B cell (primary cell): ENCODE measurements at regions of chr20 and their contacts with region 1.

Region 1: DNA sequence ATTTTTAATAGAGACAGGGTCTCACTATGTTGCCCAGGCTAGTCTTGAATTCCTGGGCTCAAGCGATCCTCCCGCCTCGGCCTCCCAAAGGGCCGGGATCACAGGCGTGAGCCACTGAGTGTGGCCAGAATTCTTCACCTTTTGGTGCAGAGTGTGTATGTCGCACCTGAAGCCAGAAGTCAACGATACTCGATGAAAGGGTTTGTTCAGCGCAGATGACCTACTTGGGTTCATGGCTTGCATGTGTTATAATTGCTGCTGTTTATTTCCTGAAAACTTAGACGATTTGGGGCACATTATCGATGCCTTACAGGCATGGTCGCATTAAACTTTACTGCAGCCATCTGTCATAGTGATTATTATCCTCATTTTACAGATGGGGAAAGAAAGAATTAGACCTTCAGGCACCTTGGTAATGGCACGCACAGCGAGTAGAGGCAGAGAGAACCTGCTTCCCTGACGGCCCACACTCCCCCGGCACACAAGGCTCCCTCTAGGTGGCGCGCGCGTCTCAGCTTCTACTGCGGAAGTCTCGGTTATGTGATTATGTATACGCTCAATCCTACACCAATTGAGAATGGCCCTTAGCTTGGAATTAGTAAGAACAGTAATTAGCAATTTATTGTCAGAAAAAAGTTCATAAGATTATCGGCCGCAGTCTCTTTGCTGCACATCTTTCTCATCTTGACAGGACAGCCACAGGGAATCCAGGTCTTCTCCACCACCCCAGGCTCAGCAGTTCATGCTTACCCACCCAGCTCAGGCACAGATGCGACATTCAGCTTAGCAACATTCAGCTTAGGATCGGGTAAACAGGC is 212.8 kb upstream of the PROKR2 start:
- DNase-seq: peak; percentile 85
- ATAC-seq: peak; percentile 91
- H3K4me3 ChIP-seq: no peak overlapping the region
- H3K4me3 Mint-ChIP-seq: peak overlapping the region; percentile 54
- H3K27ac ChIP-seq: no peak overlapping the region
- H3K27ac Mint-ChIP-seq: peak overlapping the region; percentile 56
- H3K4me1 ChIP-seq: peaks cover 7 to 12% of the 10 kb centered on the region in 2 donors
- H3K4me1 Mint-ChIP-seq: peaks cover 10% of the 10 kb centered on the region
- H3K27me3 ChIP-seq: no peaks in the 10 kb centered on the region
- H3K27me3 Mint-ChIP-seq: no peaks in the 10 kb centered on the region
- CTCF ChIP-seq: peak; percentile 79

Region 2: GRCh38 chr20:5279661-5280060 is 249.9 kb before region 1 on chr20:
- CTCF ChIA-PET with region 1: no interaction called
- POLR2A ChIA-PET with region 1: no interaction called
- intact Hi-C with region 1: no loop called
- DNase-seq: no peak
- ATAC-seq: no peak
- H3K4me3 ChIP-seq: no peak overlapping the region
- H3K4me3 Mint-ChIP-seq: no peak overlapping the region
- H3K27ac ChIP-seq: no peak overlapping the region
- H3K27ac Mint-ChIP-seq: no peak overlapping the region
- H3K4me1 ChIP-seq: no peaks in the 10 kb centered on the region
- H3K4me1 Mint-ChIP-seq: no peaks in the 10 kb centered on the region
- H3K27me3 ChIP-seq: peaks cover 0 to 6% (median 0%) of the 10 kb centered on the region in 4 experiments
- H3K27me3 Mint-ChIP-seq: peaks cover 52% of the 10 kb centered on the region
- CTCF ChIP-seq: no peak

Region 3: GRCh38 chr20:5513975-5514516 is 15.5 kb before region 1 on chr20:
- CTCF ChIA-PET with region 1: interaction called, 11 read pairs
- POLR2A ChIA-PET with region 1: no interaction called
- intact Hi-C with region 1: no loop called
- DNase-seq: no peak
- ATAC-seq: no peak
- H3K4me3 ChIP-seq: no peak overlapping the region
- H3K4me3 Mint-ChIP-seq: no peak overlapping the region
- H3K27ac ChIP-seq: no peak overlapping the region
- H3K27ac Mint-ChIP-seq: no peak overlapping the region
- H3K4me1 ChIP-seq: no peaks in the 10 kb centered on the region
- H3K4me1 Mint-ChIP-seq: no peaks in the 10 kb centered on the region
- H3K27me3 ChIP-seq: no peaks in the 10 kb centered on the region
- H3K27me3 Mint-ChIP-seq: no peaks in the 10 kb centered on the region
- CTCF ChIP-seq: no peak

Region 4: GRCh38 chr20:5557123-5557522 is 27.6 kb after region 1 on chr20:
- CTCF ChIA-PET with region 1: interaction called, 12 read pairs
- POLR2A ChIA-PET with region 1: no interaction called
- intact Hi-C with region 1: loop called (anchors 1 kb)
- DNase-seq: peak; percentile 63
- ATAC-seq: peak; percentile 49
- H3K4me3 ChIP-seq: no peak overlapping the region
- H3K4me3 Mint-ChIP-seq: no peak overlapping the region
- H3K27ac ChIP-seq: no peak overlapping the region
- H3K27ac Mint-ChIP-seq: no peak overlapping the region
- H3K4me1 ChIP-seq: no peaks in the 10 kb centered on the region
- H3K4me1 Mint-ChIP-seq: peaks cover 1% of the 10 kb centered on the region
- H3K27me3 ChIP-seq: no peaks in the 10 kb centered on the region
- H3K27me3 Mint-ChIP-seq: no peaks in the 10 kb centered on the region
- CTCF ChIP-seq: peak; percentile 69

Region 5: DNA sequence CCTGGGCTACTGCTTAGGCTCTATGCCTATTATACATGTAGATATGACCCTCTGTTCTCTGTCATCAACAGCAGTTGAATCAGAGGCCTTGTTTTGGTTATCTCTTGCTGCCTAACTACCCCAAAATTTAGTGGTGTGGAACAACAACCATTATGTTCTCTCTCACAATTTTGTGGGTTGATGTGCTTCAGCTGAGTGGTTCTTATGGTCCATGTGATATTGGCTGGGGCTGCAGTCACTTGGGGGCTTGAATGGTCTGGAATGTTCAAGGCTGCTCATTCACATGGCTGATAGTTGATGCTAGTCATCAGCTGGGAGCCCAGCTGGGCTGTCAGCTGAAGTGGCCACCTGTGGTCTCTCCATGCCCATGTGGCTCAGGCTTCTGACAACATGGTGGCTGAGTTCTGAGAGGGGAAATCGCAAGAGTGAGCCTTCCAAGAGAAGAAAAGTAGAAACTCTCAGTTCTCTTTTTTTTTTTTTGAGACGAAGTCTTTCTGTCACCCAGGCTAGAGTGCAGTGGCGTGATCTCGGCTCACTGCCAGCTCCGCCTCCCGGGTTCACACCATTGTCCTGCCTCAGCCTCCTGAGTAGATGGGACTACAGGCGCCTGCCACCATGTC is 268.4 kb after region 1 on chr20:
- CTCF ChIA-PET with region 1: interaction called, 18 read pairs
- POLR2A ChIA-PET with region 1: no interaction called
- intact Hi-C with region 1: no loop called
- DNase-seq: peak; percentile 89
- ATAC-seq: peak; percentile 87
- H3K4me3 ChIP-seq: peak overlapping the region in 1 of 5 experiments; percentile 3
- H3K4me3 Mint-ChIP-seq: peak overlapping the region; percentile 73
- H3K27ac ChIP-seq: peak overlapping the region; percentile 84 to 89
- H3K27ac Mint-ChIP-seq: peak overlapping the region; percentile 100
- H3K4me1 ChIP-seq: peaks cover 17 to 32% of the 10 kb centered on the region in 2 donors
- H3K4me1 Mint-ChIP-seq: peaks cover 27% of the 10 kb centered on the region
- H3K27me3 ChIP-seq: no peaks in the 10 kb centered on the region
- H3K27me3 Mint-ChIP-seq: no peaks in the 10 kb centered on the region
- CTCF ChIP-seq: no peak

Region 6: GRCh38 chr20:5950271-5951031 is 420.9 kb after region 1 on chr20 and contains the starts of genes MCM8 and TRMT6:
- CTCF ChIA-PET with region 1: interaction called, 3 read pairs
- POLR2A ChIA-PET with region 1: interaction called, 3 read pairs
- intact Hi-C with region 1: loop called (anchors 1 kb)
- DNase-seq: peak; percentile 98
- ATAC-seq: peak; percentile 98
- H3K4me3 ChIP-seq: peak within 1 kb of the TSS; percentile 77 to 88 (median 85)
- H3K4me3 Mint-ChIP-seq: peak within 1 kb of the TSS; percentile 94
- H3K27ac ChIP-seq: peak within 1 kb of the TSS; percentile 74 to 90
- H3K27ac Mint-ChIP-seq: peak within 1 kb of the TSS; percentile 95
- H3K4me1 ChIP-seq: peaks cover 14 to 18% of the 10 kb centered on the region in 2 donors
- H3K4me1 Mint-ChIP-seq: peaks cover 21% of the 10 kb centered on the region
- H3K27me3 ChIP-seq: no peaks in the 10 kb centered on the region
- H3K27me3 Mint-ChIP-seq: no peaks in the 10 kb centered on the region
- CTCF ChIP-seq: no peak
- total RNA-seq, gene MCM8: 13.7 and 13.8 TPM in 2 replicates
- total RNA-seq, gene TRMT6: 14.2 and 18.2 TPM in 2 replicates

Region 7: GRCh38 chr20:6074145-6074561 is 544.6 kb after region 1 on chr20:
- CTCF ChIA-PET with region 1: interaction called, 148 read pairs
- POLR2A ChIA-PET with region 1: no interaction called
- intact Hi-C with region 1: no loop called
- DNase-seq: peak; percentile 13
- ATAC-seq: no peak
- H3K4me3 ChIP-seq: no peak overlapping the region
- H3K4me3 Mint-ChIP-seq: no peak overlapping the region
- H3K27ac ChIP-seq: no peak overlapping the region
- H3K27ac Mint-ChIP-seq: no peak overlapping the region
- H3K4me1 ChIP-seq: no peaks in the 10 kb centered on the region
- H3K4me1 Mint-ChIP-seq: no peaks in the 10 kb centered on the region
- H3K27me3 ChIP-seq: peaks cover 0 to 5% (median 2%) of the 10 kb centered on the region in 4 experiments
- H3K27me3 Mint-ChIP-seq: peaks cover 2% of the 10 kb centered on the region
- CTCF ChIP-seq: peak; percentile 21